ENCODE measurements at regions of chr20 and their contacts with region 1.

Region 1: GRCh38 chr20:44460795-44461141 is 14.9 kb upstream of the TTPAL start:
- DNase-seq: peak; percentile 45 to 49
- ATAC-seq: peak; percentile 72 to 87; a peak in 5 of 6 replicates
- H3K4me3 ChIP-seq: no peak overlapping the region
- H3K27ac ChIP-seq: peak overlapping the region; percentile 2 to 49; a peak in 2 of 6 replicates
- H3K4me1 ChIP-seq: peaks cover 10% of the 10 kb centered on the region; the same call in 1 of the 3 replicates
- CTCF ChIP-seq: peak; percentile 81
- EP300 ChIP-seq: no peak
- POLR2A ChIP-seq: no peak
- RAD21 ChIP-seq: peak; percentile 82 to 84

Region 2: DNA sequence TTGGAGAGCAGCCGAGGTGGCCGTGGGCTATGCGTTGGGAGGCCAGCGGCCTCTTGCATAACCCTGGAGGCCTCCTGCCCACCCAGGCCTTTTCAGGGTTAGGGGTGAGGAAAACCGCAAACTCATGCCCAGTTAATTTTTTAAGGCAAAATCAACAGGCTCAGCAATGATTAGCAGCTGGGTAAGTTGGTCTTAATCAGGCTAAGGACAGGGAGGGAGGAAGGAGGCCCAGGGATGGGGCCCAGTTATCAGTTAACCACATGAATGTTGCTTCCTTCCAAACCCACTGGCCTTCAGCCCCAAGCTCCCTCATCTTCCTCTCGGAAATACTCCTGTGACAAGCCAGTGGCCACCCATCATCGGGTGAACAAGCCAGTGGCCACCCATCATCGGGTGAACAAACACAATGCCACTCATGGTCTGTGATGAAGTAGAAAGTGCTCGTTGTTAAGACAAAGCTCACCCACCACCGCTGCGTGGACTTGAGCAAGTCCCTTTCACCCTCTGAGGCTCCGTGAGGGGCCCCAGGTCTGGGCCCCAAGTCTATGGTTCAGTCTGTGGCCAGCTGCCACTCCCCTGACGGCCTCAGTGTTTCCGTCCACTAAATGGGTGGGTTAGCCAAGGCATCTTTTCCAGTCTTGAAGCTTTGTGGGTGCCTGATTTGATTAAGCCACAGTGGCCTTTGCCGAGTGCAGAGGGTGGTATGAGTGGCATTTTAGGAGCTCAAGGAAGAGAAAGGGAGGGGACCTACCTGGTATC is 65.9 kb before region 1 on chr20:
- CTCF ChIA-PET with region 1: interaction called, 43 read pairs
- POLR2A ChIA-PET with region 1: no interaction called
- DNase-seq: peak in 1 of 2 experiments; percentile 74
- ATAC-seq: peak in 1 of 2 experiments; percentile 11; a peak in 2 of 6 replicates
- H3K4me3 ChIP-seq: no peak overlapping the region
- H3K27ac ChIP-seq: peak overlapping the region; percentile 75 to 87
- H3K4me1 ChIP-seq: peaks cover 77% of the 10 kb centered on the region
- CTCF ChIP-seq: no peak
- EP300 ChIP-seq: peak; percentile 85 to 92; a peak in 3 of 5 replicates
- POLR2A ChIP-seq: no peak
- RAD21 ChIP-seq: peak in 1 of 2 experiments; percentile 11; a peak in 1 of 5 replicates

Region 3: DNA sequence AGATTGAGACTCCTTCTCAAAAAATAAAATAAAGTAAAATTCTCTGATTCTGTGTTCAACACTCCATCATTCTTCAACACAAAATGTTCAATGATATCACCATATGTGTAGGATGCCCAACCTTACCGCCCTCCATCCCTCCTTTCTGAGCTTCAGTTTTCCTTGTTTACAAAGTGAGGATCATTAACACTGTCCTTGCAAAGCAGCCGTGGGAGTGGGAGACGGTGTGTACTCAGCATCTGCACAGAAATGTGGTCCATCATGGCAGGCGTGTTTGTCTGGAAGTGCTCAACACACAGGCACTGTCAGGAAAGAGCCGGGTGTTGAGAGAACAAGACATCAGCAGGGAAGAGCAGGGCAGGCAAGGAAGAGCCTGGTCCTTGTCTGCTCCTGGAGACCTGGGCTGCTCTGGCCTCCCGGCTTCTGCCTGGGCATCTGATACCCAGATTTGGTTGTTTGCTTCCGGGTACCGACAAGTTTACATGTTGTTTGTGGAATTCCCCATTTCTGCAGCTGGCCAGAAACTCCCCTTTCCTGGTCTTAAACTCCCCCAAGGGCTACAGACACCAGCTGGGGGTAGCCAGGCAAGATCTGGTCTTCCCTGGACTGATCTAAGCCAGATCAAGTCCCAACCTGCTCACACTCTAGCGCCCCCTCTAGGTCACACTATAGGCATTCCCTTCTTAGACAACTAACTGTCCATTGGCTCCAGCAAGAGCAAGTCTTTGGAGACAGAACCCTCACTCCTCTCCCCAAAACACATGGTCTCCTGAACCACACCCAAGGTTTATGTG is 11.8 kb before region 1 on chr20:
- CTCF ChIA-PET with region 1: interaction called, 15 read pairs
- POLR2A ChIA-PET with region 1: no interaction called
- DNase-seq: peak in 1 of 2 experiments; percentile 61
- ATAC-seq: peak; percentile 44 to 67; a peak in 3 of 6 replicates
- H3K4me3 ChIP-seq: no peak overlapping the region
- H3K27ac ChIP-seq: no peak overlapping the region
- H3K4me1 ChIP-seq: no peaks in the 10 kb centered on the region
- CTCF ChIP-seq: peak; percentile 24; the same call in 1 of the 3 replicates
- EP300 ChIP-seq: no peak
- POLR2A ChIP-seq: no peak
- RAD21 ChIP-seq: no peak

Region 4: DNA sequence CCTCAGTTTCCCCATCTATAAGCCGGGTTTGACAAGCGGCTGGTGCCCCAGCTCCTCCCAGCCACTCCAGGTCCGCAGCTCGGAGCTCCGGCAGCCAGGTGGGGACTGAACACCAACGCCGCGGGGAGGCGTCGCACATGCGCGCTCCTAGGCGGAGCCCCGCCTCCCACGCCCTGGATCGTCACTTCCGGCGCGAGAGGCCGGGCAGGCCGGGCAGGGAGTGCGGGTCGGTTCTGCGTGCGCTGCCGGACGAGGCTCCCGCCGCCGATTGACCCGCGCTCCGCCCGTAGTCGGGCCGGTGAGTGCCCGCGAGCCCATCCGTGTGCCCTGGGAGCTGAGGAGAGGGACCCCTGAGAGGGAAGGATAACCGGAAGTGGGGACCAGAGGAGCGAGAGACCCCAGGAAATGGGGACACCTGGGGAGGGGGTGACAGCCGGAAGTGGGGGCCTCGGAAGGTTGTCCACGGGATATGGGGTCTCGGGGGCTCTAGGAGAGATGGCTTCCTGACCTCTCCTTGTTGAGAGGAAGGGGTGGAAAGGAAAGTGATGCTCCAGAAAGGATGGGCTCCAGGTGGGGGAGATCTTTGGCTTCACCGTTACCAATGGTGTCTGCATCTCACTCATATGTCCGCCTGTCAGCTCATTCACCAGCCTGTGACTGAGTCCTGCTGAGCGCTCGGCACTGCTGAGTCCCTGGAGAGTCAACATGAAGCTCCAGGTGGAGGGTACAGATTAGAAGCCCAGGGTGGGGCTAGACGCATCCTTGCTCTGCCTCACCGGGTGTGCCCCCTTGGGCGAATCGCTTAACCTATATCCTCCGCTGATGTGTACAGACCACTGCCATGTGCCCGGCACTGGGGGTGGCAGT is 15.2 kb after region 1 on chr20 and contains the start of gene TTPAL:
- CTCF ChIA-PET with region 1: interaction called, 62 read pairs
- POLR2A ChIA-PET with region 1: interaction called, 4 read pairs
- DNase-seq: peak; percentile 81 to 88
- ATAC-seq: peak; percentile 98
- H3K4me3 ChIP-seq: peak within 1 kb of the TSS; percentile 92
- H3K27ac ChIP-seq: peak within 1 kb of the TSS; percentile 91 to 95
- H3K4me1 ChIP-seq: peaks cover 12% of the 10 kb centered on the region; the same call in 2 of the 3 replicates
- CTCF ChIP-seq: peak; percentile 20; the same call in 2 of the 3 replicates
- EP300 ChIP-seq: no peak
- POLR2A ChIP-seq: peak; percentile 99
- RAD21 ChIP-seq: peak; percentile 9 to 48; a peak in 2 of 5 replicates
- polyA plus RNA-seq, gene TTPAL: 9.2 and 11.0 TPM in 2 replicates